H1 (cell line): ENCODE measurements at regions of chr17 and their contacts with region 1.

Region 1: GRCh38 chr17:76014184-76014924 is 12.8 kb downstream of the EVPL start:
- DNase-seq: peak; percentile 83 to 89
- H3K4me3 ChIP-seq: no peak overlapping the region
- H3K27ac ChIP-seq: no peak overlapping the region
- H3K4me1 ChIP-seq: peaks cover 0 to 2% (median under 1%) of the 10 kb centered on the region in 4 experiments; a peak in 3 of 7 replicates
- H3K27me3 ChIP-seq: no peaks in the 10 kb centered on the region; a peak in 1 of 7 replicates
- CTCF ChIP-seq: peak; percentile 88 to 99 (median 96)
- EP300 ChIP-seq: peak in 1 of 2 experiments; percentile 65; a peak in 1 of 3 replicates
- POLR2A ChIP-seq: no peak
- RAD21 ChIP-seq: peak; percentile 93 to 97

Region 2: DNA sequence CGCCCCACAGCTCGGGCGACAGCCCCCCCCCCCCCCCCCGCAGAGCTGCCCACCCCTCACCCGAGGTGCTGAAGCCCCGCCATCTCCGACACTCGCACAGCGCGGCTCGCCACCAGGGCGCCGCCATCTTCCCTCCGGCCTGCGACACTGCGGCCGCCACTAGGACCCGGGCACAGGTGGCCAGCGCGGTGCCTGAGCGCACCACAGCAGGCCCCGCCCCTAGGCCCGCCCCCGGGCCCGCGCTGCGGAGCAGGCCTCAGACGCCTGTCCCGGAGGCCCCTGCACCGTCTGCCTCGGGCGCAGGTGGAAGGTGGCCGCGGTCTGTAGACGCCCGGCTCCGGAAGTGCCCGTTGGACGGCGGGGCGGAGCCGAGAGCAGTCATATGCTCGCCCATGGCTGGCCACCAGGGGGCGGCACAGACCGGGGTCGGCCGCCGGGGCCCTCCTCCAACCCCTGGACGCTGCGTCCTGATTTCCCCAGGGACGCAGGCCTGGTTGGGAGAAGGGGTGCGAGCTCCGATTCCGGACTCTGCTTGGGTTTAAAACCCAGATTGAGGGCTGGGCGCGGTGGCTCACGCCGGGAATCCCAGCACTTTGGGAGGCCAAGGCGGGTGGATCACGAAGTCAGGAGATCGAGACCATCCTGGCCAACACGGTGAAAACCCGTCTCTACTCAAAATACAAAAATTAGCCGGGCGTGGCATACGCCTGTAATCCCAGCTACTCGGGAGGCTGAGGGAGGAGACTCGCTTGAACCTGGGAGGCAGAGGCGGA is 109.4 kb before region 1 on chr17 and contains the start of gene MRPL38:
- CTCF ChIA-PET with region 1: interaction called, 885 read pairs
- POLR2A ChIA-PET with region 1: interaction called, 8 read pairs
- DNase-seq: peak; percentile 92 to 98
- H3K4me3 ChIP-seq: peak within 1 kb of the TSS; percentile 74 to 97 (median 89)
- H3K27ac ChIP-seq: peak within 1 kb of the TSS; percentile 83; the same call in 1 of the 2 replicates
- H3K4me1 ChIP-seq: no peaks in the 10 kb centered on the region; a peak in 1 of 7 replicates
- H3K27me3 ChIP-seq: no peaks in the 10 kb centered on the region
- CTCF ChIP-seq: peak; percentile 83 to 93 (median 85)
- EP300 ChIP-seq: no peak
- POLR2A ChIP-seq: peak in 1 of 2 experiments; percentile 71; a peak in 1 of 3 replicates
- RAD21 ChIP-seq: peak; percentile 91 to 95
- total RNA-seq, gene MRPL38: 125 and 132 TPM in 2 replicates

Region 3: GRCh38 chr17:76036497-76037261 is 22.3 kb after region 1 on chr17:
- CTCF ChIA-PET with region 1: interaction called, 229 read pairs
- POLR2A ChIA-PET with region 1: interaction called, 4 read pairs
- DNase-seq: no peak
- H3K4me3 ChIP-seq: no peak overlapping the region
- H3K27ac ChIP-seq: 0 out of 2 replicates have a peak overlapping the region, but pooled peaks have one; percentile 13
- H3K4me1 ChIP-seq: peaks cover 0 to 20% (median 8%) of the 10 kb centered on the region in 4 experiments; a peak in 6 of 7 replicates
- H3K27me3 ChIP-seq: no peaks in the 10 kb centered on the region
- CTCF ChIP-seq: no peak
- EP300 ChIP-seq: no peak
- POLR2A ChIP-seq: no peak
- RAD21 ChIP-seq: no peak

Region 4: DNA sequence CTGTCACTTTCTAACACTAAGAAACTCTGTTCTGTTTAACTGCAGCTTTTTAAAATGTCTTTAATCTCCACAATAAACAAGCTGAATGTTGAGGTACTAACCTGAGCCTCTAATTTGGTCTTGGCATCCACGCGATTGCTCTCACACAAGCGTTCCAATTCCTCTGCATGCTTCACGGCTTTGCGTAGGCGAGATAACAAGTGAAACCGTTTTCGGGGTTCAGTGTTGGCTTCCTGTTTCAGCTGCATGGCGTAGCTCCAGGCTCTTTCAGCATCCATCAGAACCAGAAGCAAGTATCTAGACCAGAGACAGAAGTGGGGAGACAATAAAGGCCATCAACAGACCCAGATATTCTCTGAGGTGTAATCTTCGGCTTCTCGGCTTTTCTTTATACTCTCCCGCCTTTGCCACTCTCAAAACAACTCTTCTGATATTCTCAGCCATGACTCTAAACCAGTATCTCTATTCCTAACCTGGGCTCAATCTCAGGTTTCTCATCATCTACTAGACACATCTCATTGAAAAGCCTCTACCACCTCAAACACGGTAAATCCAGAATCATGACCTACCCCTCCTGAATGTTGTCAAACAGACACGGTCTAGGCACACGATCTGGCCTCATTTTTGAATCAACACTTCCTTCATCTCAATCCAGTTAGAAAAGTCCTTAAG is 49.7 kb after region 1 on chr17:
- CTCF ChIA-PET with region 1: interaction called, 14 read pairs
- POLR2A ChIA-PET with region 1: no interaction called
- DNase-seq: no peak
- H3K4me3 ChIP-seq: no peak overlapping the region
- H3K27ac ChIP-seq: no peak overlapping the region
- H3K4me1 ChIP-seq: no peaks in the 10 kb centered on the region
- H3K27me3 ChIP-seq: no peaks in the 10 kb centered on the region
- CTCF ChIP-seq: no peak
- EP300 ChIP-seq: no peak
- POLR2A ChIP-seq: no peak
- RAD21 ChIP-seq: no peak

Region 5: DNA sequence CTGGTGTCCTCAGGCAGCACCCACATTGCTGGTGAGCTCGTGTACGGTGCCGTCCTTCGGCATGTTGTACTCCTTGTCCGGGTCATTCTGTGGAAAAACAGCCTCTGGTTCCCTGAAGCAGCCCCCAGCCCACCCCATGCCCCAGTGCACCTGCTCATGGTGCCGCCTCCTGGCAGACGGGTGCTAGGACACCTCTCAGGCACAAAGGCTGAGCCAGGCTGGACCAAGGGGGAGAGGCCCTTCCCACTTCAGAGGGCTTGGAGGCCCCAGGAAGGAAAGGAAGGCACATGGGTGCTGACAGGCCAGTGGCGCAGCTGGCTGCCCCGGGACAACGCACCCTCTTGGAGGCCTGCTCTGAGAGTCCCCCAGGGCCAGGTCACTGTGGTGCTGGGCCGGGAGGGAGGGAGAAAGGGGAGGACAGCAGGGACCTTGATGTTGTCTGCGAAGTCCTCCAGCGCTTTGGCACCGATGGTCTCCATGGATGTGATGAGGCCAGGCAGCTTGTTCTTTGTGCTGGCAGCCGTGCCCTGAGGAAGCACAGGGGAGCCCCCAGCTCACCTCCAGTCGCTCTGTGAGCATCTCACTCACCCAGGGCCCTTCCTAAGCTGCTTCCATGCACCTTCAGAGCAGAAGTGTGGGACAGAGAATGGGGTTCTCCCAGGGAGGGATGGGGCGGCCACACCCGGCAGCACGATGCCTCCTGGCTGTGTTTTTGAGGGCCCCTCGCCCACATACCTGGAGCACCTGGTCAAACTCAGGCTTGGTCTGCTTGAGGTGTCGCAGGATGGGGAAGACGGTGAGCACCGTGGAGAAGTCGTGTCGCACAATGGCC is 73.9 kb after region 1 on chr17:
- CTCF ChIA-PET with region 1: interaction called, 14 read pairs
- POLR2A ChIA-PET with region 1: no interaction called
- DNase-seq: peak in 1 of 2 experiments; percentile 72
- H3K4me3 ChIP-seq: no peak overlapping the region
- H3K27ac ChIP-seq: no peak overlapping the region
- H3K4me1 ChIP-seq: no peaks in the 10 kb centered on the region
- H3K27me3 ChIP-seq: no peaks in the 10 kb centered on the region
- CTCF ChIP-seq: peak; percentile 60 to 74 (median 63)
- EP300 ChIP-seq: no peak
- POLR2A ChIP-seq: no peak
- RAD21 ChIP-seq: peak; percentile 40 to 56